ENCODE measurements at regions of chr5 and their contacts with region 1.

Region 1: GRCh38 chr5:38666668-38667498 is 110.4 kb upstream of the LIFR start:
- DNase-seq: peak; percentile 67
- H3K4me3 ChIP-seq: no peak overlapping the region
- H3K27ac ChIP-seq: no peak overlapping the region
- H3K4me1 ChIP-seq: peaks cover 5% of the 10 kb centered on the region
- H3K27me3 ChIP-seq: no peaks in the 10 kb centered on the region
- CTCF ChIP-seq: peak; percentile 65 to 82
- POLR2A ChIP-seq: no peak

Region 2: DNA sequence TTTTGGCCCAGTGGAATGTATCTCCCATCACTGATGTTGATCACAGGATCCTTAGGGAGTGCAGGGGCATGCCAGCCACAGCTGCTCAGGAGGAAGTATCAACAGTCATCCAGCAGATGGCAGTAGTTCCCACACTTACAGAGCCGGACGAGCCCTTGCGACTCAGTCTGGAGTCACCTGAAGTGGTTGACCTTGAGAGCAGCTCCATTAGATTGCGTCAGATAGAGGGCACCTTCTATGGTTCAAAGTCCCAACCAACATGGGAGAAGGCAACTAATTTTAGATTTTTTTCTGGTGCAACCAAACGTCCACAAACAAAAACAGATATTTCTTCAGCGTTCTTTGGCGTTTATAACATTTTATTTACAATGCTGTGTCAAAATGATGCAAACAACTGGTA is 284.0 kb before region 1 on chr5:
- CTCF ChIA-PET with region 1: interaction called, 18 read pairs
- POLR2A ChIA-PET with region 1: no interaction called
- dilution Hi-C with region 1: no loop called
- intact Hi-C with region 1: loop called (anchors 1 kb)
- DNase-seq: peak; percentile 72
- H3K4me3 ChIP-seq: no peak overlapping the region
- H3K27ac ChIP-seq: no peak overlapping the region
- H3K4me1 ChIP-seq: no peaks in the 10 kb centered on the region
- H3K27me3 ChIP-seq: peaks cover under 1 to 2% of the 10 kb centered on the region in 2 experiments
- CTCF ChIP-seq: peak; percentile 80 to 81
- POLR2A ChIP-seq: no peak

Region 3: DNA sequence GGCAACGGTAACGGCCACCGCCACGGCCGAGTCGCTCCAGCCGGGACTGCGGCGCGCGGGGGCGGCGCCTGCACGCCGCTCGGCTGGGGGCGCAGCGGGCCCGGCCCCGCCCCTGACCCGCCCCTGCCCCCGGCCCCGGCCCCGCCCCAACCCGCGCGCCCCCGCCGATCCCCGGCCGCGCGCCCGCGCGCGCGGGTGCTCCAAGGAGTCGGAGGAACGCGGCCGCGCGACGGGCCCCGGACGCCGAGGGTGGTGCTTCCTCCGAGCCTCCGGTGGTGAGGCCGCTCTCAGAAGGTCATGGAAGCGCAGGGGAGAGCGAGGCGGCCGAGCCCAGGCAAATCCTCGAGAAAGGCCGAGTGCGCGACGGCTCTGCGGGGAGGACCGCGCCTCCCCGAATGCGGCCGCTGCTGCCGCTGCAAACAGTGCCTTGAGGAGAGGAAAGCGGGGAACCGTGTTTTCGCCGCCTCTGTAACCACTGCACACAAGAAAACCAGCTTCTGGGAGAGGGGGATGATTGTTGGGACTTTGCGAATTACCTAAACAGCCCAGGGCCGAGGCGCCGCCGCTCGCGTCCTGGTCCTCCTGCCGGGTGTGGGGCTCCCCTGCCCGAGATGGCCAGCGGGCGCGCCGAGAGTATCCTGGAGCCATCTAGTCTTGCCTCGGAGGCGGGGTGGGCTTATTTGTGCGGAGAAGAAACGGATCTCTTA is 110.1 kb before region 1 on chr5 and contains the start of gene LIFR:
- CTCF ChIA-PET with region 1: interaction called, 5 read pairs
- POLR2A ChIA-PET with region 1: no interaction called
- dilution Hi-C with region 1: no loop called
- intact Hi-C with region 1: loop called (anchors 1 kb)
- DNase-seq: peak; percentile 80
- H3K4me3 ChIP-seq: peak within 1 kb of the TSS; percentile 82 to 86 (median 83)
- H3K27ac ChIP-seq: peak within 1 kb of the TSS; percentile 68
- H3K4me1 ChIP-seq: peaks cover 21% of the 10 kb centered on the region
- H3K27me3 ChIP-seq: peaks cover 0 to 2% of the 10 kb centered on the region in 2 experiments
- CTCF ChIP-seq: peak in 1 of 2 donors; percentile 3
- POLR2A ChIP-seq: peak; percentile 66
- total RNA-seq, gene LIFR: 34.9 and 36.4 TPM in 2 replicates

Region 4: GRCh38 chr5:38650946-38651345 is 15.9 kb before region 1 on chr5:
- CTCF ChIA-PET with region 1: interaction called, 4 read pairs
- POLR2A ChIA-PET with region 1: no interaction called
- dilution Hi-C with region 1: no loop called
- intact Hi-C with region 1: loop called (anchors 1 kb)
- DNase-seq: peak; percentile 92
- H3K4me3 ChIP-seq: peak overlapping the region in 1 of 3 experiments; percentile 28
- H3K27ac ChIP-seq: peak overlapping the region; percentile 44
- H3K4me1 ChIP-seq: peaks cover 12% of the 10 kb centered on the region
- H3K27me3 ChIP-seq: peaks cover 0 to 2% of the 10 kb centered on the region in 2 experiments
- CTCF ChIP-seq: no peak
- POLR2A ChIP-seq: no peak

Measured in endothelial cell of umbilical vein (primary cell).